H1 (cell line): ENCODE measurements at regions of chr18 and their contacts with region 1.

Region 1: GRCh38 chr18:22813648-22814328 is 119.3 kb upstream of the RBBP8 start:
- DNase-seq: no peak
- H3K4me3 ChIP-seq: no peak overlapping the region
- H3K27ac ChIP-seq: no peak overlapping the region
- H3K4me1 ChIP-seq: no peaks in the 10 kb centered on the region; a peak in 1 of 7 replicates
- H3K27me3 ChIP-seq: no peaks in the 10 kb centered on the region
- CTCF ChIP-seq: peak in 2 of 3 experiments; percentile 65 to 70; a peak in 3 of 4 replicates
- EP300 ChIP-seq: no peak
- POLR2A ChIP-seq: no peak
- RAD21 ChIP-seq: peak; percentile 96 to 98

Region 2: DNA sequence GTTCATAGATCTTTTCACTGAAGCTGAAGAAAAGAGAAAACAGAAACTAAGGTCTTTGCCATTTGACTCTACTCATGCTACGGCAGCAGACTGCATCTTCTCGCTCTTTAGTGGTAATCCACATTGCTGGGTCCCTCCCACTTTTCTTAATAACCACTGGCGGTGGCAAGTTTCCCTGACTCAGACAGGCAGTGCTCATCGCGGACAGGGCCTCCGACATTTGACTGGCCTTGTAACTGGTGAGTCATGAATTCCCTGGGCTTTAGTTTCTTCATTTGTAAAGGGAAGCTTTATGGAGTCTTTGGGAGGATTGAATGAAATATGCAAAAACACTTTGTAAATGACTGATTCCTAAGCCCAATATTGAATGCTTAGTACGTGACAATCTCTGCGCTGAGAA is 118.8 kb before region 1 on chr18:
- CTCF ChIA-PET with region 1: no interaction called
- POLR2A ChIA-PET with region 1: no interaction called
- DNase-seq: peak in 1 of 2 experiments; percentile 31
- H3K4me3 ChIP-seq: no peak overlapping the region
- H3K27ac ChIP-seq: no peak overlapping the region
- H3K4me1 ChIP-seq: peaks cover 0 to 4% (median 1%) of the 10 kb centered on the region in 4 experiments; a peak in 2 of 7 replicates
- H3K27me3 ChIP-seq: peaks cover 0 to 1% (median 0%) of the 10 kb centered on the region in 4 experiments; a peak in 1 of 7 replicates
- CTCF ChIP-seq: no peak
- EP300 ChIP-seq: no peak
- POLR2A ChIP-seq: no peak
- RAD21 ChIP-seq: no peak

Region 3: DNA sequence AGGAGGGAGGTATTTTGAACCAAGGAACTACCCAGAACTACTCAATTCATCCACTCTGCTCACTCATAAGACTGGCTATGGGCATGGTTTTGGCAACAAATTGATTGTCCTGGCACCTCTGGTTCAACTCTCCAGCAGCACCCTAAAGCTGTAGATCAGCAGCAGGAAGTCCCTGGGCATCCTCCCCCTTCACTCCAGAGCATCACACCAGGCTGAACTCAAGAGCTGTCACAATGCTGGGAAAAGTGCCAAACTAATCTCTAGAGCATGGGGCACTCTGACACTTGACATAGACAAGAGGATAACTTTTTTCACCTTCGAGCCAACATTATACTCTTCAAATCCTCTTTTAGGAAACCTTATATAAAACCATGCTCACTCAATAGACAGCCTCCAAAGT is 34.8 kb before region 1 on chr18:
- CTCF ChIA-PET with region 1: no interaction called
- POLR2A ChIA-PET with region 1: no interaction called
- DNase-seq: no peak
- H3K4me3 ChIP-seq: no peak overlapping the region
- H3K27ac ChIP-seq: no peak overlapping the region
- H3K4me1 ChIP-seq: no peaks in the 10 kb centered on the region
- H3K27me3 ChIP-seq: peaks cover 0 to 1% (median 0%) of the 10 kb centered on the region in 4 experiments; a peak in 1 of 7 replicates
- CTCF ChIP-seq: no peak
- EP300 ChIP-seq: no peak
- POLR2A ChIP-seq: no peak
- RAD21 ChIP-seq: no peak

Region 4: GRCh38 chr18:22983175-22983574 is 169.4 kb after region 1 on chr18:
- CTCF ChIA-PET with region 1: interaction called, 37 read pairs
- POLR2A ChIA-PET with region 1: interaction called, 7 read pairs
- DNase-seq: no peak
- H3K4me3 ChIP-seq: no peak overlapping the region
- H3K27ac ChIP-seq: no peak overlapping the region
- H3K4me1 ChIP-seq: no peaks in the 10 kb centered on the region
- H3K27me3 ChIP-seq: no peaks in the 10 kb centered on the region
- CTCF ChIP-seq: peak in 2 of 3 experiments; percentile 20 to 23; a peak in 2 of 4 replicates
- EP300 ChIP-seq: no peak
- POLR2A ChIP-seq: no peak
- RAD21 ChIP-seq: peak in 1 of 2 experiments; percentile 58; a peak in 3 of 4 replicates